Tibial artery (tissue), 4 donors: ENCODE measurements at regions of chr6 and their contacts with region 1.

Region 1: DNA sequence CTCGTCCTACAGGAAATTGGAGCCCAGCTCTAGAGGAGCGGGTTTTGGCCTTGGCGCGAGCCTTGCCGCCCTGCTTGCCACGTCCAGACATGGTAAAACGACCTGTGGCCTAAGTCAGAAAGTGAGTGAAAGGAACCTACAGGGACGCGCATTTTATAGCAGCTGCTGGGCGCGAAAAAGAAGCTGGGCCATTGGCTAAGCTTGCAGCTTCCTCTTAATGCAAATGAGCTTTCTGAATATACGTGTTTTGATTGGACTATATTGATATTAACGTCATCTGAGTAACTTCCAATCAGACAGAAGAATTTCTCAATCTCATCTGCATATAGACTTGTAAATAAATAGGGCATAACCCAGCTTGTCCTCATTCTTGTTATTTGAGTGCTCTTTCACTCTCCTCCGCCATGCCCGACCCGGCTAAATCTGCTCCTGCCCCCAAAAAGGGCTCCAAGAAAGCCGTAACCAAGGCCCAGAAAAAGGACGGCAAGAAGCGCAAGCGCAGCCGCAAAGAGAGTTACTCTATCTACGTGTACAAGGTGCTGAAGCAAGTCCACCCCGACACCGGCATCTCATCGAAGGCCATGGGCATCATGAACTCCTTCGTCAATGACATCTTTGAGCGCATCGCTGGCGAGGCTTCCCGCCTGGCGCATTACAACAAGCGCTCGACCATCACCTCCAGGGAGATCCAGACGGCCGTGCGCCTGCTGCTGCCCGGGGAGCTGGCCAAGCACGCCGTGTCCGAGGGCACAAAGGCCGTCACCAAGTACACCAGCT is 18.9 kb downstream of the OR2B2 start:
- DNase-seq: peak; percentile 58 to 82
- H3K4me3 ChIP-seq: peak overlapping the region; percentile 68 to 87
- H3K27ac ChIP-seq: peak overlapping the region; percentile 50 to 89
- H3K4me1 ChIP-seq: peaks cover 0 to 33% (median 19%) of the 10 kb centered on the region in 4 donors
- H3K27me3 ChIP-seq: peaks cover 0 to 42% of the 10 kb centered on the region in 2 donors
- CTCF ChIP-seq: no peak

Region 2: DNA sequence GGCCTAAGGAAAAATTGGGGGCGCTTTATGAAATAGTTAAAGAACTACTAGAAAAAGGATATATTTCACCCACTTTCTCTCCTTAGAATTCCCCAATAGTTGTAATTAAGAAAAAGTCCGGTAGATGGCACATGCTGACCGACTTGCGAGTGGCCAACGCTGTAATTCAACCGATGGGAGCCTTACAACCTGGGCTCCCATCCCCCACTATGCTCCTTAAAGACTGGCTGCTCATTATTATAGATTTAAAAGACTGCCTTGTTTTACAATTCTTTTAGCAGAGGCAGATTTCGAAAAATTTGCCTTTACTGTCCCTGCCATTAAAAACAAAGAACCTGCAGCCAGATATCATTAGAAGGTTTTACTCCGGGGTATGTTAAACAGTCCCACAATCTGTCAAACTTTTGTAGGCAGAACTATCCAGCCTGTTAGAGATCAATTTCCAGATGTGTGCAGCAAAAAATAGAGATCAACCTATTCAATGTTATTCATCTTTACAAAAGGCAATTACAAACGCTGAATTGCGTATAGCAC is 704.3 kb before region 1 on chr6:
- intact Hi-C with region 1: loop called (anchors 10 kb)
- DNase-seq: peak; percentile 48 to 71
- H3K4me3 ChIP-seq: peak overlapping the region; percentile 63 to 67
- H3K27ac ChIP-seq: peak overlapping the region; percentile 71 to 89
- H3K4me1 ChIP-seq: no peaks in the 10 kb centered on the region
- H3K27me3 ChIP-seq: no peaks in the 10 kb centered on the region
- CTCF ChIP-seq: peak; percentile 64 to 77

Region 3: GRCh38 chr6:27441001-27441400 is 452.2 kb before region 1 on chr6:
- intact Hi-C with region 1: no loop called
- DNase-seq: no peak
- H3K4me3 ChIP-seq: no peak overlapping the region
- H3K27ac ChIP-seq: no peak overlapping the region
- H3K4me1 ChIP-seq: no peaks in the 10 kb centered on the region
- H3K27me3 ChIP-seq: no peaks in the 10 kb centered on the region
- CTCF ChIP-seq: no peak

Region 4: DNA sequence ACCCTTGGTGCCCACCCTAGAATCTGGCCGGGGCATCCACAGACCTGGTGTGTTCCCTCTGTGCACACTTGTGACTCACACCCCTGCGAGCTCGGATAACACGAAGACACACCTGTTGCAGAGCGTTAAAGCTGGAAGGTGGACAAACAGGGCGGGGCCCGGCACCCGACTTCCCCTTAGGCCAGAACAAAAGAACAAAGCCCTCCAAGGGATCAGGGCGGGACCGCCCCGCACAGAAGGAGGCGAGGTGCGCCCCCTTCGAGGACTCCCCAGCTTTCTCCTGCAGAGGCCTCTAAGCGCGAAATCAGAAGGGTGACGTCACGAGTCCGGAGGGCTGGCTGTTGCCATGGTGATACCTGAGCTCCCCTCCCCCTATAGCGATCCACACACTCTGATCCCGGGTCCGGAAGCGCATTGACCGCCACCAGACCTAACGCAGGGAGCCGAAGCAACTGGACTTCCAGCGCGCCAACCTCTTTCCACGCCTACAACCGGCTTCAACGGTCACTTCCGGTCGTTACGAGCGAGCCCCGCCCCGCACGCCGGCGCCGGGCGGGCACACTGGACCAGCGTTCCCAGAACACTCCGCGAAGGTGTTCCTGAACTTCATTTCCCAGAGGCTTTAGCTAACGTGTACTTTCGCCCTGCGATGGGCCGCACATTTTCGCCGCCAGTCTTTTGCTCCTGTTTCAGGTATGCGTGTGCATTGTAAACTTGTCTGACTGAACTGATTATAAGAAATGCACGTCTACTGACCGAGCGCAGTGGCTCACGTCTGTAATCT is 420.4 kb before region 1 on chr6 and contains the start of gene ZNF184:
- intact Hi-C with region 1: loop called (anchors 10 kb)
- DNase-seq: peak; percentile 93 to 98
- H3K4me3 ChIP-seq: peak within 1 kb of the TSS; percentile 78 to 89
- H3K27ac ChIP-seq: peak within 1 kb of the TSS; percentile 84 to 91
- H3K4me1 ChIP-seq: peaks cover 0 to 27% (median 16%) of the 10 kb centered on the region in 4 donors
- H3K27me3 ChIP-seq: no peaks in the 10 kb centered on the region
- CTCF ChIP-seq: peak in 1 of 2 experiments; percentile 10

Region 5: DNA sequence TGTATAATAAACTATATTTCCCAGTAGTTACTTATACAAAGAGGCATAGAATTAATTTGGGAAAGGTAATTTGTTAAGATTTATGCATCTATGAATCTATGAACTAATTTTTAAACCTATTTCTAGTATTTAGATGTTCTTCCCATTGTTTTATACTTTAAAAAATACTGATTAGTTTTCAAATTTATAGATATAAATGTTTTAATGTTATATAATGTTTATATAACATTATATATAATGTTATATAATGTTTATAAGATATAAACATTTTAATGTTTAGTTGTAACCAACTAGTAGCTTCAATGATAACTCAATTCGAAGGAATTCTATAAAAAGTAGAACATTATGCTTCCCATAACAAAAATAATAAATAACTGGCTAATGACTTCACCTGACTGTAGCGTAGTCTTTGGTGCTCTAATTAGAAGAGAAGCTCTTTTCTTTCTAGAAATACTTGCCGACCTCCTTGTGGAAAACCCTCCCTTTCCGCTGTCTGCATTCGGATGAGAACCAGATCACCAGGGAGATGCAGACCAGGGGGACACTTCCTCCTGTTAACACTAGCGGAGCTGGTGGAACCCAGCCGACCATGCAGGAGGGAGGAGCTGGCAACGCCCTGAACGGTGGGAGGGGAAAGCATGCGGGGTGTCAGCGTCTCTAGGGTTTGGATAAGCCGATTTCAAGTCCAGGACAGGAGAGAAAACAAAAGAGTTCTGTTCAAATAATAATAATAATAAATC is 139.4 kb before region 1 on chr6:
- intact Hi-C with region 1: loop called (anchors 5 kb)
- DNase-seq: peak; percentile 37 to 71
- H3K4me3 ChIP-seq: peak overlapping the region; percentile 65 to 74
- H3K27ac ChIP-seq: no peak overlapping the region
- H3K4me1 ChIP-seq: peaks cover 0 to 11% (median 7%) of the 10 kb centered on the region in 4 donors
- H3K27me3 ChIP-seq: peaks cover 0 to 21% of the 10 kb centered on the region in 2 donors
- CTCF ChIP-seq: no peak

Region 6: GRCh38 chr6:27772261-27773001 is 120.8 kb before region 1 on chr6:
- intact Hi-C with region 1: loop called (anchors 2 kb)
- DNase-seq: peak; percentile 82 to 90
- H3K4me3 ChIP-seq: no peak overlapping the region
- H3K27ac ChIP-seq: no peak overlapping the region
- H3K4me1 ChIP-seq: peaks cover 0 to 10% (median 4%) of the 10 kb centered on the region in 4 donors
- H3K27me3 ChIP-seq: peaks cover 0 to 51% of the 10 kb centered on the region in 2 donors
- CTCF ChIP-seq: peak; percentile 83 to 95

Region 7: DNA sequence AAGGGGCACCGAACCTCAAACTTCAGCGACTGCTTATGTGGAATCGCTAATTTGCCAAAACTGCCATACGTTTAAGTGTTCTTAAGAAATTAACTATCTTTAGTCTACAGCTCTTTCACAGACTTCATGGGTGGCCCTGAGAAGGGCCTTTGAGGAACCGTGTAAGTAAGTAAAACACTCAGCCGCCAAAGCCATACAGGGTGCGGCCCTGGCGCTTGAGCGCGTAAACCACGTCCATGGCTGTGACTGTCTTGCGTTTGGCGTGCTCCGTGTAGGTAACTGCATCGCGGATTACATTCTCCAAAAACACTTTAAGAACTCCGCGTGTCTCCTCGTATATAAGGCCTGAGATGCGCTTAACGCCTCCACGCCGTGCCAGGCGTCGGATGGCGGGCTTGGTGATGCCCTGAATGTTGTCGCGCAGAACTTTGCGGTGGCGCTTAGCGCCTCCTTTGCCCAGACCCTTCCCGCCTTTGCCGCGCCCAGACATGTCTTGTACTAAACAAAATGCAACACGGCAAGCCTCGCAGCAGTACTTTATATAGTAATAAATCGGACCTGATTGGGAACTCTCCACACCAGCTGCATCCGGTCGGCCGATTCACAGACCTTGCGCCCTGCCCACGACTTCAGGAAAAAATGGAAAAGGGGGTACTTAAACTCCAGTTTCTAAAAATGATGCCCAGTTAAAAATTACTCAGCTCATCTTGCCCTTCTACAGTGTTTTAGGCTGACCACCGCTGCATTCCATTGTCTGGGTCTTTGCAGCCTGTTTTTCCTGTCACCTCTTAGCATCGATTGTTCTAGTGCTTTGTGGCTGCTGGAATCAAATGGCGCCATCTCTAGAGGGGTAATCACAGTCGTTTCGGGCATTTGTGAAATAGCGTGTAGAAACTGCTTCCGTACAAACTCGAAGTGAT is 20.0 kb before region 1 on chr6:
- intact Hi-C with region 1: no loop called
- DNase-seq: peak in 1 of 2 donors; percentile 45
- H3K4me3 ChIP-seq: peak overlapping the region; percentile 45 to 55
- H3K27ac ChIP-seq: no peak overlapping the region
- H3K4me1 ChIP-seq: peaks cover 0 to 19% (median 8%) of the 10 kb centered on the region in 4 donors
- H3K27me3 ChIP-seq: peaks cover 0 to 17% of the 10 kb centered on the region in 2 donors
- CTCF ChIP-seq: no peak

Region 8: DNA sequence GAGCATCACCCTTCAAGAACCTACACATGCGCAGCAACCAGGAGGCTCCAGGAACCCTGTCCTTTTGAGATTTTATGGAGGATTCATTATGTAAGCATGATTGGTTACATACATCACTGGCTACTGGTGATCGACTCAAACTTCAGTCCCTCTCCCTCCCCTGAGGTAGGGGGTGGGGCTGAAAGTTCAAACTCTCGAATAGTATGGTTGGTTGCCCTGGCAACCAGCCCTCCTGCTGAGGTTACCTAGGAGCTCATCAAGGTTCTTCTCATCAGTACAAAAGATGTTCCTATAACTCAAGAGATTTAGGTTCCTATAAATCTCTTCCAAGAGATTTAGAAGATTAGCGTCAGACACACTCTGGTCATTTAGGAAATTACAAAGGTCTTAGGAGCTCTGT is 310.0 kb after region 1 on chr6:
- intact Hi-C with region 1: no loop called
- DNase-seq: no peak
- H3K4me3 ChIP-seq: no peak overlapping the region
- H3K27ac ChIP-seq: no peak overlapping the region
- H3K4me1 ChIP-seq: peaks cover 0 to 11% (median 5%) of the 10 kb centered on the region in 4 donors
- H3K27me3 ChIP-seq: peaks cover 0 to 25% of the 10 kb centered on the region in 2 donors
- CTCF ChIP-seq: no peak